AG04449 (cell line): ENCODE measurements at regions of chr11 and their contacts with region 1.

Region 1: DNA sequence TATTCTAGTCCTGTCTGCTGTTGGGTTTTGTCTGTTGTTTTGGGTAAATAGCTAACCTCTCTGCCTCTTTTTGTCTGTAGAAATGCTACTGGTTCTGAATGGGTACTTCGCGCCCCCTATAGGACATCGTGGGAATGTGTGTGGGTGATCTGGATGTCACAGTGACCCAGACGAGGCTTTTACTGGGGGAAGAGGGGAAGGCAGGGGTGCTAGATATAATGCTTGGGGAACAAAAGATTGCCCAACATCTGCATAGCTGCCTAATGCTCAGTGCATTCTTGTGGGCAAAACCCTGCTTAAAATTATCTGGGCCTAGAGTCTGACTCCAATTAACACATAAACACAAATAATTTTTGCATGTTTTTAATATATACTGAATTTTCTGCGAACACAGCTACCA is 57.7 kb downstream of the BMAL1 start:
- DNase-seq: no peak
- H3K4me3 ChIP-seq: no peak overlapping the region
- CTCF ChIP-seq: peak; percentile 73

Region 2: GRCh38 chr11:13098063-13098462 is 237.3 kb before region 1 on chr11:
- CTCF ChIA-PET with region 1: no interaction called
- POLR2A ChIA-PET with region 1: no interaction called
- DNase-seq: no peak
- H3K4me3 ChIP-seq: no peak overlapping the region
- CTCF ChIP-seq: no peak

Region 3: GRCh38 chr11:13216019-13216710 is 119.2 kb before region 1 on chr11:
- CTCF ChIA-PET with region 1: interaction called, 329 read pairs
- POLR2A ChIA-PET with region 1: interaction called, 20 read pairs
- DNase-seq: peak; percentile 85
- H3K4me3 ChIP-seq: peak overlapping the region; percentile 26
- CTCF ChIP-seq: no peak

Region 4: DNA sequence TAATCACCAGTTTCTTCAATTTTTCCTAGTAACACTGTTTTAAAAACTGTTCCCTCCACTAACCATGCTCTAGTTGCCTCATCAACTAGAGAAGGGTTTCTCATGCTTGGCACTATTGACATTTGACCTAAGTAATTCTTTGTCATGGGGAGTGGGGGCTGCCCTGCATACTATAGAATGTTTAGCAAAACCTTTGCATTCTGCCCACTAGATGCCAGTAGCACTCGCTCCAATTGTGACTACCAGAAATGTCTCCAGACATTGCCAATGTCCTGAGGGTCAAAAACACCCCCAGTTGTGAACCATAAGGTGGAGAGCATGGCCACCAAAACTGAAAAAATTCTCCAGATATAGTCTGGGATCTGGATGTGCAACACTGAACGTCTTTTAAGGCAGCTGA is 85.3 kb before region 1 on chr11:
- CTCF ChIA-PET with region 1: interaction called, 28 read pairs
- POLR2A ChIA-PET with region 1: no interaction called
- DNase-seq: no peak
- H3K4me3 ChIP-seq: no peak overlapping the region
- CTCF ChIP-seq: peak; percentile 27

Region 5: DNA sequence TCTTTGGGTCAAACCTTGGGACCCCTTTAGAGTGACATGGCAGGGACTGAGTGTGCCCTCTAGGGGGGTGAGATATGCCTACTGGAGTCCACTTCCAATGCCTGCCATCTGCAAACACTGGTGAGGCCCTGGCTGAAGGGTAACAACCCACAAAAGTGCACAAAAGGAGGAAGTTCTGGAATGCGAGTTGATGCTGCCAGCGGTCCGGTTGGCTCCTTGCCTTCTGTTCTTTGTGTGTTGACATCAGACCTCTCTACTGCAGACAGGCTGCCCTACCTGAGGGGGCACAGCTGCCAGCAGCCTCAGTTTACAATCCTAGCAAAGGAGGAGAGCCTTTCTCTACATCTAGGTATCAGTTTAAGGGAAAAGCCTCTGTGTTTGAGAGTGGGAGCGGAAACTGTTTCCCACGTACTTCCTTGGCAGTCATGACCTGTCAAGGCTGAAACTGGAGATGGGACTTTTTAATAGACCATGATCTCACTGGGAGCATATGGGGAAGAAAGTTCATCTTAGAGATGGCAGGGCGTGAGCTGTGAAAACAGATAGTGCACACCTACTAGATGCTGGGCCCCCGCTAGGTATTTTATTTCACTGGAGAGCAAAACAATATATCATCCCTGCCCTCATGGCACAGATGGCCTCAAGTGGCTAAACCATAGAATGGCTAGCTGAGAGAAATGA is 30.5 kb before region 1 on chr11:
- CTCF ChIA-PET with region 1: interaction called, 16 read pairs
- POLR2A ChIA-PET with region 1: no interaction called
- DNase-seq: no peak
- H3K4me3 ChIP-seq: no peak overlapping the region
- CTCF ChIP-seq: no peak

Region 6: GRCh38 chr11:13354335-13354734 is 19.0 kb after region 1 on chr11:
- CTCF ChIA-PET with region 1: interaction called, 51 read pairs
- POLR2A ChIA-PET with region 1: no interaction called
- DNase-seq: no peak
- H3K4me3 ChIP-seq: no peak overlapping the region
- CTCF ChIP-seq: peak; percentile 19

Region 7: DNA sequence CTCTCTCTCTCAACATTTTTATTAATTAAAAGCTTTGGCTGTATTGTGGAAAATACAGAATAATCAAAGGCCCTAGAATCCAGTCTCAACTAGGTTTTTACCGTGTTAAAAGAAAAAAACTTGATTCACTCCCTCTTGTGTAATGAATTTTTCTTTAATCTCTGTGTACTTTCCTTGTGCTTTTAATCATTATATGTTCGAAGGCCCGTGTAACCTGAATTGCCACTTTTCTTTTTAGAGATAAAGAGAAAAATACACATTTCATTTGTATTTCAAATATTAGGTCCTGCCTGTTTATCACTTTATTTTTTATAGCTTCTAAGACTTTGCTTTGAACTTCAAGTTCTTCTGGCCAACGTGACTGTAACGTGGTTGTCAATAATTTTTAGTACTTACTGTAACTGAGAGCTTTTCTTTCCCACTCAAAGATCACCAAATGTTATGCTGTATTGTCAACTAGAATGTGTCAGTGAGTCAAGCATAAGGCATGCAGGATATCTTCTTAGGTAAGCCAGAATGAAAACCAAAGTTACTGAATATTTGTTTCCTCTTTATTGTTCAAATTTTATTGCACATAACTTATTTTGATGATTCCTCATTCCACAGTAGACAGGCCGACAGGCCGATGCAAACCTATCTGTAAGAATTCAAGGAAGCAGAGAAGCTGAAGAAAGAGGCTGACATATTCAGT is 309.8 kb after region 1 on chr11:
- CTCF ChIA-PET with region 1: no interaction called
- POLR2A ChIA-PET with region 1: no interaction called
- DNase-seq: no peak
- H3K4me3 ChIP-seq: no peak overlapping the region
- CTCF ChIP-seq: no peak